Activated CD4-positive, alpha-beta T cell treated with anti-CD3 and anti-CD28 coated beads for 36 hours (primary cell): ENCODE measurements at regions of chr1 and their contacts with region 1.

Region 1: DNA sequence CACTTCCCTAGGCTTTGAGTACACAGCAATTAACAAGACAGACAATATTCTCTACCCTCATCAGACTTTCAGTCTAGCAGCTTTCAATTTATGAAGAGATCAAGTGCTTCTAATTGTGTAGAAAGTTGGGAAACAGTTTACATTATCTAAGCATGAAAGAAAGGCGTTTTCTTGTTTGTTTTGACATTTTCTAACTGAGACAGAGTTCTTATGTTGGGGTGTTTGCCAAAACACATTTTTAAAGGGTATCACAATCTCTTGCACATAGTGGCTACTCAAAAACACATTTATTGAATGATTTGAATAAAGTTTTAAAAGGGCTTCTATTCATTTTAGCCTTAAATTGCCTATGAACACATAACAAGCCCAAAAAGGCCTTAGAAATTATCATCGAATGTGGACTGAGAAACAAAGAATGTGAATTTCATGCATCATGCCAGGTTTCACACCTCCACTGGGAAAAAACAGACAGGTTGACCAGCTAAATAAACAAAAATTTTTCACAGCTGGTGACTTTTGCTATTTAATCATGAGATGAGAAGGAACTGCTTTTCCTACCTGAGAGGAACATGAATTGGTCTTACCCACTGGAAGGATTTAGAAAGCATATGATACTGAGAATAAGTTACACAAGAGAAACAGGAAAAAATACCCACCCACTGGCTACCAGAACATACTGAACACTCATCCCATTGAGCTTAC is 394.5 kb upstream of the PKN2 start:
- DNase-seq: no peak
- ATAC-seq: no peak
- H3K4me3 Mint-ChIP-seq: no peak overlapping the region
- H3K27ac Mint-ChIP-seq: no peak overlapping the region
- H3K4me1 Mint-ChIP-seq: no peaks in the 10 kb centered on the region
- H3K27me3 Mint-ChIP-seq: no peaks in the 10 kb centered on the region

Region 2: DNA sequence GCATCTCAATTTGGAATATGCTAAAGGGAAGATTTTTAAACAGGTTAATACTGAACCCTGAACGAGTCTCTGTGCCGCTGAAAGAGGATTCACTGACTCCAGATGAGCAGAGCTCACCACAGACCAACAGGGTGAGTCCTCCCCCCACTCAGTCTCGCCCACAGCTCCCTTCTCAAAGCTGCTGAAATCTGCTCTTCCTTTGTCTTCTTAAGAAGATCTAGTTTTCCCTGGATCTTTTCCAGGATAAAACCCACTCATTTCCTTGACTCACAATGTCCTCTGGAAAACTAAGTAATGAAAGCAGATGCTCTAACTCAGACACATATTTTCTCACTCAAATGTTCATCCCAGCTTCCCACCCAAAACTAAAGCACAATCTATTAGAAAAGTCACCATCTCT is 52.5 kb before region 1 on chr1:
- CTCF ChIA-PET with region 1: no interaction called
- POLR2A ChIA-PET with region 1: no interaction called
- intact Hi-C with region 1: loop called in 1 of 2 experiments (anchors 5 kb)
- DNase-seq: no peak
- ATAC-seq: no peak
- H3K4me3 Mint-ChIP-seq: no peak overlapping the region
- H3K27ac Mint-ChIP-seq: no peak overlapping the region
- H3K4me1 Mint-ChIP-seq: no peaks in the 10 kb centered on the region
- H3K27me3 Mint-ChIP-seq: peaks cover 3% of the 10 kb centered on the region